HCT116 (cell line): ENCODE measurements at regions of chr22 and their contacts with region 1.

Region 1: DNA sequence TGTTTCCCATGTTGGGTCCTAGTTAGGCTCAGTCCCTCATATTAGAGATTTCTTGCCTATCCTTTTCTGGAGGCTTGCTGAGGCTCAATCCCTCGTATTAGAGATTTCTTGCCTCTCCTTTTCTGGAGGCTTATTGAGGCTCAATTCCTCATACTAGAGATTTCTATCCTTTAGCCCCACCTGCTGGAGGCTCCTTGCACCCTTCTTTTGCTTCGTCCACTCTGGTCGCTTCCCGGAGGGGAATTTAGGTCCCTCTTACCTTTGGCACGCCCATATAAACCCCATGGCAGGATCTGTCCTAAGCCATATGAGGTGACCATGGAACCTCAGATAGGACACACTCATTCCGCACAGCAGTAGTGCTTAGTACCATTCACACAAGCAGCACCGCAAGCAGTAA is 15.9 kb downstream of the CYP2D6 start:
- DNase-seq: peak; percentile 26
- ATAC-seq: peak; percentile 68
- H3K4me3 ChIP-seq: no peak overlapping the region
- H3K27ac ChIP-seq: no peak overlapping the region
- H3K4me1 ChIP-seq: no peaks in the 10 kb centered on the region
- H3K27me3 ChIP-seq: no peaks in the 10 kb centered on the region
- CTCF ChIP-seq: peak; percentile 45 to 57 (median 50); a peak in 5 of 6 replicates
- POLR2A ChIP-seq: no peak
- RAD21 ChIP-seq: peak; percentile 63

Region 2: DNA sequence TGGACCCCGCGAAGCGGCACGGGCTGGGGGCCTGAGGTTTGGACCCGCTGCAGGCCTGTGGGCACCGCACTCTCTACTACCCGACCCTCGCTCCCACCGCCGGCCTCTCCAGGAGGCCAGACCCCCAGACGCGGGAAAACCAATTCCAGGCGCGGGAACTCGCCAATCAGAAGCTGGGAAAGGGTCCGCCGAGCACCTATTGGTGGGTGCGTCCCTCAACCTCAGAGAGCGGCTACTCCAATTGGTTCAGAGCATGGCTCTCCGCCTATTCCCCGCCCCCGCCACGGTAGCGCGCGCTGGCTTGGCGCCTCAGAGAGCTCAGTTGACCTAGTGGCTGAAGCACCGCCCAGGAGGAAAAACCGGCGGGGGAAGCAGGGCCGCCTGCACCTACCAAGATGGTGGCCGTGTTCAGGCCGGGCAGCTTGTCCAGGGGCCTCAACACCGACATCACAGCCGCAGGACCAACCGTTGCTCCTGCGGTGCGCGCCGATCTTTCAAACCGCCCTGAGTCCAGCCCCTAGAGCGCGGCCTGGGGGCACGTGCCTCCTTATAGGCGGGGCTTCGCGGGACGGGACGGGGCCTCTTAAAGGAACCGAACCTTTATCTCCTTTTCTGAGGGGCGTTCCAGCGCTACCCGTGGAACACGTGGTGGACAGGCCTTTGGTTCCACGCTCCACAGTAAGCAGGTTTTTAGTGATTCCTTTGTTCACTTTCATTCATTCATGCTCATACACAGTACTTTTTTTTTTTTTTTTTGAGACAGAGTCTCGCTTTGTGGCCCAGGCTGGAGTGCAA is 167.9 kb before region 1 on chr22 and contains the start of gene CENPM:
- CTCF ChIA-PET with region 1: interaction called, 3 read pairs
- POLR2A ChIA-PET with region 1: interaction called, 3 read pairs
- RAD21 ChIA-PET with region 1: no interaction called
- intact Hi-C with region 1: loop called (anchors 5 kb)
- DNase-seq: peak; percentile 92
- ATAC-seq: peak; percentile 95
- H3K4me3 ChIP-seq: peak within 1 kb of the TSS; percentile 74 to 85
- H3K27ac ChIP-seq: peak within 1 kb of the TSS; percentile 86
- H3K4me1 ChIP-seq: peaks cover 14 to 41% of the 10 kb centered on the region in 2 experiments
- H3K27me3 ChIP-seq: no peaks in the 10 kb centered on the region
- CTCF ChIP-seq: no peak
- POLR2A ChIP-seq: peak; percentile 84
- RAD21 ChIP-seq: no peak
- total RNA-seq, gene CENPM: 44.7 TPM

Region 3: DNA sequence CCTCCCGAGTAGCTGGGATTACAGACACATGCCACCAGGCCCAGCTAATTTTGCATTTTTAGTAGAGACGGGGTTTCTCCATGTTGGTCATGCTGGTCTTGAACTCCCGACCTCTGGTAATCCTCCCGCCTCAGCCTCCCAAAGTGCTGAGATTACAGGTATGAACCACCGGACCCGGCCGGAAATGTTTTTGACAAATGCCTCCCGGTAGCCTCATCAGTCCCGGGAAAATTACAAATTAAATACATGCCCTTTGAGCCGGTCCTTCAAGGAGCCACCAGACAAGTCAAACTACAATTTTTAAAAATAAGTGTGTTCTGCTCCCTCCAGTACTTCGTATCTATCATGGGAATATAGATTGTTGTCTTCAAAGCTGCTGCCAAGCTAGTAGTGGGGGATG is 98.6 kb before region 1 on chr22:
- CTCF ChIA-PET with region 1: no interaction called
- POLR2A ChIA-PET with region 1: no interaction called
- RAD21 ChIA-PET with region 1: no interaction called
- intact Hi-C with region 1: no loop called
- DNase-seq: no peak
- ATAC-seq: no peak
- H3K4me3 ChIP-seq: no peak overlapping the region
- H3K27ac ChIP-seq: no peak overlapping the region
- H3K4me1 ChIP-seq: no peaks in the 10 kb centered on the region
- H3K27me3 ChIP-seq: no peaks in the 10 kb centered on the region
- CTCF ChIP-seq: no peak
- POLR2A ChIP-seq: no peak
- RAD21 ChIP-seq: no peak

Region 4: DNA sequence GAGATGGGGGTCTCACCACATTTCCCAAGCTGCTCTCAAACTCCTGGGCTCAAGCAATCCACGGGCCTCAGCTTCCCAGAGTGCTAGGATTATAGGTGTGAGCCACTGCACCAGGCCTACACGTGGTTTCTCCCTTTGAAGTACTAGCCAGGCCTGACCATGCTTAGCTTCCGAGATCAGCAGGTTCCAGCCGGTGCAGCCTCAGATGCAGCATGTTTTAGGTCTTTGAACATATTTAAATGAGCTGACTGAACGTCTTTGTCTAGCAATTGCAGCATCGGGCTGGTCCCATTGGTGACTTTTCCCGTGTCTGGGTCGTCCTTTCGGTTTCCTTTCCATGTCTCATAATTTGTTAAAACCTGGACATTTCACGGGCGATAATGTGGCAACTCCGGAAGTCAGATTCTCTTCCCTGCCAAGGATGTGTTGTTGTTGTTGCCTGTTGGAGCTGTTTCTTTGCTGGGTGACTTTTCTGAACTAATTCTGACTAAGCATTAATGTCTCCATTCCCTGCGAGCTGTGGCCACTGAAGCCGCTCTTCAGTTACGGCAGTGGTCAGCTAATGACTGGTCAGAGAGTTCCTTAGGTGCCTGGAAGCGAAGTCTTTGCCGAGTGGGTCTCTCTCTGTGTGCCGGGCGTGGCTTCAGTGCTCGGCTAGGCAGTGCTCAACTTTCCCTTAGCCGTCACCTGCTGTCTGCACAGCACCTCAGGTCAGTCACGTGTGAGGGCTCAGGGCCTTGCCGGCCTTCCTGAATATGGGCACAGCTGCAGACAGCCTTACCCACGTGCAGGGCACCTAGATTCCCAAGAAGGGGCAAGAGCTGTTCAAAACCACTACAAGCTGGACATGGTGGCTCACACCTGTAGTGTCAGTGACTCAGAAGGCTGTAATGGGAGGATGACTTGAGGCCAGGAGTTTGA is 19.6 kb after region 1 on chr22:
- CTCF ChIA-PET with region 1: no interaction called
- POLR2A ChIA-PET with region 1: no interaction called
- RAD21 ChIA-PET with region 1: no interaction called
- intact Hi-C with region 1: no loop called
- DNase-seq: no peak
- ATAC-seq: no peak
- H3K4me3 ChIP-seq: no peak overlapping the region
- H3K27ac ChIP-seq: no peak overlapping the region
- H3K4me1 ChIP-seq: peaks cover 0 to 2% of the 10 kb centered on the region in 2 experiments; a peak in 1 of 4 replicates
- H3K27me3 ChIP-seq: no peaks in the 10 kb centered on the region
- CTCF ChIP-seq: no peak
- POLR2A ChIP-seq: no peak
- RAD21 ChIP-seq: no peak